PC-3 (cell line): ENCODE measurements at regions of chr12 and their contacts with region 1.

Region 1: GRCh38 chr12:120971299-120972179 is 6.8 kb upstream of the HNF1A start:
- DNase-seq: peak; percentile 83
- ATAC-seq: peak; percentile 88
- H3K4me3 ChIP-seq: no peak overlapping the region
- H3K27ac ChIP-seq: no peak overlapping the region
- H3K4me1 ChIP-seq: no peaks in the 10 kb centered on the region
- H3K27me3 ChIP-seq: no peaks in the 10 kb centered on the region
- CTCF ChIP-seq: peak; percentile 94

Region 2: DNA sequence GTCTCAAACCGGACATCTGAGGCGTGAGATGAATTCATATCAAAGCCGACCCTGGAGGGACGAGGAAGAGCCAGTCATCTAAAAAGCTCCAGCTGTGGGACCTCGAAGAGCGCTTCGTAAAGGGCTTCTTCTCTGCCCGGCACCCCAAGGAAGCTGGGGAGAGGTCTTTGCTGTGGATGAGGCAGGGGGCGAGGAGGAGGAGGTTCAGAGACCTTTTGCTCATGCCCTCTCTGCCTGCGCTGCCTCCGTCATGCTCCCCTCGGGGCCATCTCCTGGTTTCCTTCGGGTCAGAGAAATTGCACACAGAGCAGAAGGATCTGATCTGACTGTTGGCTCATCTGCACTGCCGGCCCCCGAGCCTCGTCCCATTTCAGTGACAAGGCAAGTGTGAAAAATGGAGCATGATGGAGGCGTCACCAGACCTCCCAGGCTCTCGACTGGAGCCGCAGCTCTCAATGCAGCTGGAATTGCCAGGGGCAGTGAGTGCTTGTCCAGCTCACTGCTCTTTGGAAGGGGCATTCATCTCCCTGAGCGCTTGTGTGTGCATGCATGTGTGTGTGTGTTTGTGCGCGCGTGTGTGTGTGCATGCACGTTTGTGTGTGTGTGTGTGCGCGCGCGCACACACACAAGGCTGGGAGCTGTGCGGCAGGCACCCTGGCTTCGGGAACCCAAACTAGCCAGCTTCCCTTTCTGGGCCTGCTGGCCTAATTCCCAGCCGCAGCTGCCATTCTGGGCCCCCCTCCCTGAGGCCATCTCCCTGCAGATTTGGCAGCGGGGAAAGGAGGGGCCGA is 321.9 kb before region 1 on chr12:
- CTCF ChIA-PET with region 1: interaction called, 9 read pairs
- POLR2A ChIA-PET with region 1: interaction called, 3 read pairs
- intact Hi-C with region 1: loop called (anchors 1 kb)
- DNase-seq: no peak
- ATAC-seq: no peak
- H3K4me3 ChIP-seq: peak overlapping the region; percentile 64; the same call in 1 of the 2 replicates
- H3K27ac ChIP-seq: no peak overlapping the region
- H3K4me1 ChIP-seq: peaks cover 5% of the 10 kb centered on the region
- H3K27me3 ChIP-seq: no peaks in the 10 kb centered on the region
- CTCF ChIP-seq: peak; percentile 38; the same call in 1 of the 2 replicates

Region 3: DNA sequence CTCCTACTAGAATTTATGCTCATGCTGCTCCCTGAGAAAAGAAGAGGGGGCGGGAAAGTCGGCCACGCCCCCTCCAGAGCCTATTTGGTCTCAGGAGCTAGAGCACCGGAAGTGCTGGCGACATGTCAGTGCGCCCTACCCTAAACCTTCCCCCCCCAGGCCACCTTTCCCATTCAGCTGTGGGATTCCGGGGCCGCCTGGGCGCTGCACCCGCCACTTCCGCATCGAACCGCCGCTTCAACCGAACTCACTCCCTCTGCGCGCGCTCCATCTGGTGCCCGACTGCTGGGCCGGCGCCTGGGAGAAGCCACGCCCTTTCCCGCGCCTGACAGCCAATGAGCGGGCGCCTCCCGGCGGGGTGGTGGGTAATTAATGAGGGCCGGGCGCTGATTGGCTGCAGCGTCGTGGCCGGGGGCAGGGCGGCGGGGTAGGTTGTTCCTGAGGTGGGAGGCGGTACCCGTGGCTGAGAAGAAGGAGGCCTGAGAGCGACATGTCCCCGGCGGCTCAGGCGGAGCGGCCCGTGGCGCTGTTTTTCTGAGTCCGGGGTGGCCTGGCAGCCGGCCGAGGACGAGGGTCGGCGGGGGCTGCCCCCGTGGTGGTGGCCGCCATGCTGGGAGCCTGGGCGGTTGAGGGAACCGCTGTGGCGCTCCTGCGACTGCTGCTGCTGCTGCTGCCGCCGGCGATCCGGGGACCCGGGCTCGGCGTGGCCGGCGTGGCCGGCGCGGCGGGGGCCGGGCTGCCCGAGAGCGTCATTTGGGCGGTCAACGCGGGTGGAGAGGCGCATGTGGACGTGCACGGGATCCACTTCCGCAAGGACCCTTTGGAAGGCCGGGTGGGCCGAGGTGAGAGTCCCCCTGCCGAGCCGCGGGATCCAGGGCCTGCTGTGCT is 284.6 kb before region 1 on chr12 and contains the start of gene MLEC:
- CTCF ChIA-PET with region 1: no interaction called
- POLR2A ChIA-PET with region 1: no interaction called
- intact Hi-C with region 1: loop called (anchors 1 kb)
- DNase-seq: peak; percentile 98
- ATAC-seq: peak; percentile 76
- H3K4me3 ChIP-seq: peak within 1 kb of the TSS; percentile 96
- H3K27ac ChIP-seq: peak within 1 kb of the TSS; percentile 93
- H3K4me1 ChIP-seq: peaks cover 34% of the 10 kb centered on the region
- H3K27me3 ChIP-seq: no peaks in the 10 kb centered on the region
- CTCF ChIP-seq: peak; percentile 18; the same call in 1 of the 2 replicates
- total RNA-seq, gene MLEC: 158 and 166 TPM in 2 replicates

Region 4: GRCh38 chr12:120710031-120710804 is 261.3 kb before region 1 on chr12 and contains the start of gene UNC119B:
- CTCF ChIA-PET with region 1: no interaction called
- POLR2A ChIA-PET with region 1: no interaction called
- intact Hi-C with region 1: loop called (anchors 5 kb)
- DNase-seq: peak; percentile 56
- ATAC-seq: peak; percentile 68
- H3K4me3 ChIP-seq: peak within 1 kb of the TSS; percentile 83
- H3K27ac ChIP-seq: 0 out of 2 replicates have a peak within 1 kb of the TSS, but pooled peaks have one; percentile 9
- H3K4me1 ChIP-seq: peaks cover 25% of the 10 kb centered on the region
- H3K27me3 ChIP-seq: no peaks in the 10 kb centered on the region
- CTCF ChIP-seq: no peak
- total RNA-seq, gene UNC119B: 15.9 and 23.8 TPM in 2 replicates

Region 5: GRCh38 chr12:120856980-120857379 is 114.6 kb before region 1 on chr12:
- CTCF ChIA-PET with region 1: interaction called, 16 read pairs
- POLR2A ChIA-PET with region 1: no interaction called
- intact Hi-C with region 1: loop called (anchors 1 kb)
- DNase-seq: peak; percentile 52
- ATAC-seq: peak; percentile 52; the same call in 1 of the 2 replicates
- H3K4me3 ChIP-seq: no peak overlapping the region
- H3K27ac ChIP-seq: no peak overlapping the region
- H3K4me1 ChIP-seq: peaks cover 26% of the 10 kb centered on the region
- H3K27me3 ChIP-seq: no peaks in the 10 kb centered on the region
- CTCF ChIP-seq: peak; percentile 71

Region 6: DNA sequence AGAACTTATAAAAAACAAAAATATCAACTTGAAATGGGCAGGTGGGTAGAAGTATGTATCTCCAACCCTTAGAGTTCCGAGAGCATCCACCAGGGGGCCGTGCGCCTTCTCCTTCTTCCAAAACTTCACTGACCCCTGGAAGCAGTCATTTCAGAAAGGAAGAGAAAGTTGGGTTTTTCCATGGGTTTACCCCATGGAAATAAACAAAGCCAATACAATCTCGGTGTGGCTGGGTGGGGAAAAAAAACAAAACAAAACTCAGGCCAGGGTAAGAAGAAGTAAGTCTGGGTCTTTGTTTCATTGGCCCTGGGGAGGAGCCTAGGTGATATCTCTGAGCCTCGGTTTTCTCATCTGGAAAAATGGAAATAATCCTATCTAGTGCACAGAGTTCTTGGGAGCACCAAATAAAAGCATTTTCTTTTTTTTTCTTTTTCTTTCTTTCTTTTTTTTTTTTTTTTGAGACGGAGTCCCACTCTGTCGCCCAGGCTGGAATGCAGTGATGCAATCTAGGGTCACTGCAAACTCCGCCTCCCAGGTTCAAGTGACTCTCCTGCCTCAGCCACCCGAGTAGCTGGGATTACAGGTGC is 26.8 kb before region 1 on chr12:
- CTCF ChIA-PET with region 1: interaction called, 12 read pairs
- POLR2A ChIA-PET with region 1: no interaction called
- intact Hi-C with region 1: loop called (anchors 1 kb)
- DNase-seq: peak; percentile 72
- ATAC-seq: peak; percentile 93
- H3K4me3 ChIP-seq: no peak overlapping the region
- H3K27ac ChIP-seq: no peak overlapping the region
- H3K4me1 ChIP-seq: no peaks in the 10 kb centered on the region
- H3K27me3 ChIP-seq: no peaks in the 10 kb centered on the region
- CTCF ChIP-seq: peak; percentile 92

Region 7: GRCh38 chr12:121008347-121009093 is 37.0 kb after region 1 on chr12:
- CTCF ChIA-PET with region 1: no interaction called
- POLR2A ChIA-PET with region 1: no interaction called
- intact Hi-C with region 1: no loop called
- DNase-seq: peak; percentile 19
- ATAC-seq: no peak
- H3K4me3 ChIP-seq: no peak overlapping the region
- H3K27ac ChIP-seq: no peak overlapping the region
- H3K4me1 ChIP-seq: no peaks in the 10 kb centered on the region
- H3K27me3 ChIP-seq: no peaks in the 10 kb centered on the region
- CTCF ChIP-seq: no peak